Activated CD8-positive, alpha-beta T cell treated with anti-CD3 and anti-CD28 coated beads for 36 hours (primary cell): ENCODE measurements at regions of chrX and their contacts with region 1.

Region 1: GRCh38 chrX:23901805-23902204 is 5.9 kb downstream of the APOO start:
- DNase-seq: peak; percentile 63
- ATAC-seq: peak; percentile 81
- H3K4me3 Mint-ChIP-seq: no peak overlapping the region
- H3K27ac Mint-ChIP-seq: no peak overlapping the region
- H3K4me1 Mint-ChIP-seq: peaks cover 9% of the 10 kb centered on the region
- H3K27me3 Mint-ChIP-seq: no peaks in the 10 kb centered on the region
- CTCF ChIP-seq: no peak

Region 2: DNA sequence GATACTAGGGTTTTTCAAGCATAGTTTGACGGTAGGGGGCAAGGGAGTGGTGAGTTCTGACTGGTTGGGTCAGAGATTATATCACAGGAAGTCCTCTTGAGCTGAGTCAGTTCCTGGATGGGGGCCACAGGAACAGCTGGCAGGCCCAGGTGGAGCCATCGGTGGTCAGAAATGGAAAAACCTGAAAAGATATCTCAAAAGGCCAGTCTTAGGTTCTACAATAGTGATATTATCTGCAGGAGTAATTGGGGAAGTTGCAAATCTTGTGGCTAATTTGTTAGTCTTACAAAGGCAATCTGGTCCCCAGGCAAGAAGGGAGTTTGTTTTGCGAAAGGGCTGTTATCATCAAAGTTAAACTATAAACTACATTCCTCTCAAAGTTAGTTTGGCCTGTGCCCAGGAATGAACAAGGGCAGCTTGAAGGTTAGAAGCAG is 407.8 kb before region 1 on chrX:
- CTCF ChIA-PET with region 1: no interaction called
- POLR2A ChIA-PET with region 1: no interaction called
- intact Hi-C with region 1: no loop called
- DNase-seq: peak; percentile 21
- ATAC-seq: peak; percentile 20
- H3K4me3 Mint-ChIP-seq: no peak overlapping the region
- H3K27ac Mint-ChIP-seq: no peak overlapping the region
- H3K4me1 Mint-ChIP-seq: peaks cover 4% of the 10 kb centered on the region
- H3K27me3 Mint-ChIP-seq: no peaks in the 10 kb centered on the region
- CTCF ChIP-seq: no peak

Region 3: GRCh38 chrX:23694606-23695005 is 207.2 kb before region 1 on chrX:
- CTCF ChIA-PET with region 1: interaction called, 79 read pairs
- POLR2A ChIA-PET with region 1: interaction called, 4 read pairs
- intact Hi-C with region 1: loop called (anchors 2 kb)
- DNase-seq: peak; percentile 54
- ATAC-seq: peak; percentile 82
- H3K4me3 Mint-ChIP-seq: no peak overlapping the region
- H3K27ac Mint-ChIP-seq: no peak overlapping the region
- H3K4me1 Mint-ChIP-seq: no peaks in the 10 kb centered on the region
- H3K27me3 Mint-ChIP-seq: no peaks in the 10 kb centered on the region
- CTCF ChIP-seq: peak; percentile 53

Region 4: GRCh38 chrX:23704673-23705206 is 197.1 kb before region 1 on chrX:
- CTCF ChIA-PET with region 1: interaction called, 20 read pairs
- POLR2A ChIA-PET with region 1: interaction called, 4 read pairs
- intact Hi-C with region 1: no loop called
- DNase-seq: peak; percentile 3
- ATAC-seq: peak; percentile 45
- H3K4me3 Mint-ChIP-seq: no peak overlapping the region
- H3K27ac Mint-ChIP-seq: peak overlapping the region; percentile 42
- H3K4me1 Mint-ChIP-seq: peaks cover 9% of the 10 kb centered on the region
- H3K27me3 Mint-ChIP-seq: no peaks in the 10 kb centered on the region
- CTCF ChIP-seq: no peak

Region 5: GRCh38 chrX:23756157-23756559 is 145.6 kb before region 1 on chrX:
- CTCF ChIA-PET with region 1: interaction called, 16 read pairs
- POLR2A ChIA-PET with region 1: no interaction called
- intact Hi-C with region 1: no loop called
- DNase-seq: peak; percentile 79
- ATAC-seq: peak; percentile 79
- H3K4me3 Mint-ChIP-seq: no peak overlapping the region
- H3K27ac Mint-ChIP-seq: no peak overlapping the region
- H3K4me1 Mint-ChIP-seq: peaks cover 3% of the 10 kb centered on the region
- H3K27me3 Mint-ChIP-seq: no peaks in the 10 kb centered on the region
- CTCF ChIP-seq: peak; percentile 49

Region 6: DNA sequence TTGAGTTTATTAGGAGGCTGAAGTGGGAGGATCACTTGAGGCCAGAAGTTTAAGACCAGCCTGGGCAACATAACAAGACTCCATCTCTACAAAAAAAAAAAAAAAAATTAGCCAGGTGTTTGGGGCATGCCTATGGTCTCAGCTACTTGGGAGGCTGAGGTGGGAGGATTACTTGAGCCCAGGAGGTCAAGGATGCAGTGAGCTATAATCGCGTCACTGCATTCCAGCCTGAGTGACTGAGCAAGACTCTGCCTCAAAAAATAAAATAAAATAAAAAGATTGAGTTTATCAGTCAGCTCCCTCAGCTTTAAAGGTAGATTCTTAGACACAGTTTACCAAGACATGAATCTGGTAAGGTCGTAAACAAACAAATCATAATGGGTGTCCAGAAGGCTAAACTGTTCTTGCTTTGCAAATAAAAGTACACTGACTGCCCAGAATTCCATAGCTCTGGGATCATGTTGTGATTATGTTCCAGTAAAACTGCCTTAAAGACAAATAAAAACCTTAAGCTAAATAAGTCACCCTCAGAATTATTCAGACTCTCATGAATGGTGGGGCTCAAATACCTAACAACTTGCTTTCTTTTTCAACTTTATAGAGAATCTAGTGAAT is 12.8 kb before region 1 on chrX:
- CTCF ChIA-PET with region 1: interaction called, 12 read pairs
- POLR2A ChIA-PET with region 1: no interaction called
- intact Hi-C with region 1: no loop called
- DNase-seq: no peak
- ATAC-seq: no peak
- H3K4me3 Mint-ChIP-seq: no peak overlapping the region
- H3K27ac Mint-ChIP-seq: no peak overlapping the region
- H3K4me1 Mint-ChIP-seq: peaks cover 14% of the 10 kb centered on the region
- H3K27me3 Mint-ChIP-seq: no peaks in the 10 kb centered on the region
- CTCF ChIP-seq: no peak

Region 7: DNA sequence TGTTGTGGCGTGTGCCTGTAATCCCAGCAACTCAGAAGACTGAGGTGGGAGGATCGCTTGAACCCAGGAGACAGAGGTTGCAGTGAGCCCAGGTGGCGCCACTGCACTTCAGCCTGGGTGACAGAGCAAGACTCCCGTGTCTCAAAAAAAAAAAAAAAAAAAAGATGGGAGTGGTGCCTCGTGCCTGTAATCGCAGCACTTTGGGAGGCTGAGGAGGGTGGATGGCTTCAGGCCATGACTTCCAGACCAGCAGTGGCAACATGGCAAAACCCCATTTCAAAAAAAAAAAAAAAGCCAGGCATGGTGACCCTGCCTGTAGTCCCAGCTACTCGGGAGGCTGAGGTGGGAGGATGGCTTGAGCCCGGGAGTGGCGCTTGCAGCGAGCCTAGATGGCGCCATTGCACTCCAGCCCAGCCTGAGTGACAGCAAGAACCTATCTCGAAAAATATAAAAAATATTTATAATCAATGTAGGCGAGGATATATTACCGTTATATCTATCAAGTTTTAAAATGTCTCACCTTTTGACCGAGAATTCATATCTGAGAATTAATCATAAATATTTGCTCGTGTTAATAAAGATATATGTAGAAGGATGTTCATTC is 180.0 kb after region 1 on chrX:
- CTCF ChIA-PET with region 1: no interaction called
- POLR2A ChIA-PET with region 1: no interaction called
- intact Hi-C with region 1: no loop called
- DNase-seq: peak; percentile 68
- ATAC-seq: peak; percentile 73
- H3K4me3 Mint-ChIP-seq: peak overlapping the region; percentile 45
- H3K27ac Mint-ChIP-seq: no peak overlapping the region
- H3K4me1 Mint-ChIP-seq: peaks cover 18% of the 10 kb centered on the region
- H3K27me3 Mint-ChIP-seq: no peaks in the 10 kb centered on the region
- CTCF ChIP-seq: peak; percentile 50